ENCODE measurements at regions of chr6 and their contacts with region 1.

Region 1: GRCh38 chr6:110101885-110102284 is 77.6 kb downstream of the WASF1 start:
- DNase-seq: no peak
- ATAC-seq: peak; percentile 77
- H3K4me3 ChIP-seq: no peak overlapping the region
- H3K27ac ChIP-seq: no peak overlapping the region
- H3K4me1 ChIP-seq: peaks cover 6% of the 10 kb centered on the region
- H3K27me3 ChIP-seq: no peaks in the 10 kb centered on the region
- CTCF ChIP-seq: no peak
- EP300 ChIP-seq: no peak
- POLR2A ChIP-seq: no peak
- RAD21 ChIP-seq: no peak

Region 2: GRCh38 chr6:110063594-110064263 is 38.2 kb before region 1 on chr6:
- CTCF ChIA-PET with region 1: no interaction called
- POLR2A ChIA-PET with region 1: no interaction called
- RAD21 ChIA-PET with region 1: no interaction called
- SMC1A ChIA-PET with region 1: no interaction called
- in situ Hi-C with region 1: no loop called
- intact Hi-C with region 1: loop called (anchors 2 kb)
- DNase-seq: no peak
- ATAC-seq: peak; percentile 70
- H3K4me3 ChIP-seq: no peak overlapping the region
- H3K27ac ChIP-seq: no peak overlapping the region
- H3K4me1 ChIP-seq: peaks cover 11% of the 10 kb centered on the region; the same call in 1 of the 2 replicates
- H3K27me3 ChIP-seq: no peaks in the 10 kb centered on the region; a peak in 1 of 4 replicates
- CTCF ChIP-seq: no peak
- EP300 ChIP-seq: no peak
- POLR2A ChIP-seq: no peak
- RAD21 ChIP-seq: no peak

Region 3: GRCh38 chr6:110090876-110091275 is 11.0 kb before region 1 on chr6:
- CTCF ChIA-PET with region 1: interaction called, 3 read pairs
- POLR2A ChIA-PET with region 1: no interaction called
- RAD21 ChIA-PET with region 1: no interaction called
- SMC1A ChIA-PET with region 1: interaction called, 11 read pairs
- in situ Hi-C with region 1: no loop called
- intact Hi-C with region 1: no loop called
- DNase-seq: no peak
- ATAC-seq: no peak
- H3K4me3 ChIP-seq: no peak overlapping the region
- H3K27ac ChIP-seq: no peak overlapping the region
- H3K4me1 ChIP-seq: no peaks in the 10 kb centered on the region
- H3K27me3 ChIP-seq: no peaks in the 10 kb centered on the region
- CTCF ChIP-seq: no peak
- EP300 ChIP-seq: no peak
- POLR2A ChIP-seq: no peak
- RAD21 ChIP-seq: no peak

Region 4: GRCh38 chr6:110116258-110116657 is 14.4 kb after region 1 on chr6:
- CTCF ChIA-PET with region 1: no interaction called
- POLR2A ChIA-PET with region 1: no interaction called
- RAD21 ChIA-PET with region 1: no interaction called
- SMC1A ChIA-PET with region 1: no interaction called
- in situ Hi-C with region 1: no loop called
- intact Hi-C with region 1: no loop called
- DNase-seq: no peak
- ATAC-seq: no peak
- H3K4me3 ChIP-seq: no peak overlapping the region
- H3K27ac ChIP-seq: no peak overlapping the region
- H3K4me1 ChIP-seq: no peaks in the 10 kb centered on the region
- H3K27me3 ChIP-seq: no peaks in the 10 kb centered on the region
- CTCF ChIP-seq: no peak
- EP300 ChIP-seq: no peak
- POLR2A ChIP-seq: no peak
- RAD21 ChIP-seq: no peak

Measured in GM12878 (cell line).